IMR-90 (cell line): ENCODE measurements at regions of chr3 and their contacts with region 1.

Region 1: DNA sequence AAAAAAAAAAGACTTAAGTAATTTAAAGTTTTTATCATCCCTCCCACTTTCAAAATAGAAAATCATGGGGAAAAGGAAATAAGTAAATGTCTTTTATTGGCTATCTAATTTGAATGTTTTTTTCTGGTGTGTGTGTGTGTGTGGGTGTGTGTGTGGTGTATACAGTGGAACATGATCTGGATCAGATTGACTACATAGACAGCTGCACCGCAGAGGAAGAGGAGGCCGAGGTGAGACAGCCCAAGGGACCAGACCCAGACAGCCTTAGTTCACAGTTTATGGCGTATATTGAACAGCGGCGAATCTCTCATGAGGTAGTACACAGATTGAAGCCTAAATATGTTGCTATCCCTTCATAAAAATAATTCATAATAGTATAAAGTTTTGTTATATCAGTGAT is 44.5 kb downstream of the LRCH3 start:
- DNase-seq: no peak
- ATAC-seq: no peak
- H3K4me3 ChIP-seq: no peak overlapping the region
- H3K27ac ChIP-seq: no peak overlapping the region
- H3K4me1 ChIP-seq: no peaks in the 10 kb centered on the region
- H3K27me3 ChIP-seq: no peaks in the 10 kb centered on the region
- CTCF ChIP-seq: no peak
- POLR2A ChIP-seq: no peak
- RAD21 ChIP-seq: no peak

Region 2: DNA sequence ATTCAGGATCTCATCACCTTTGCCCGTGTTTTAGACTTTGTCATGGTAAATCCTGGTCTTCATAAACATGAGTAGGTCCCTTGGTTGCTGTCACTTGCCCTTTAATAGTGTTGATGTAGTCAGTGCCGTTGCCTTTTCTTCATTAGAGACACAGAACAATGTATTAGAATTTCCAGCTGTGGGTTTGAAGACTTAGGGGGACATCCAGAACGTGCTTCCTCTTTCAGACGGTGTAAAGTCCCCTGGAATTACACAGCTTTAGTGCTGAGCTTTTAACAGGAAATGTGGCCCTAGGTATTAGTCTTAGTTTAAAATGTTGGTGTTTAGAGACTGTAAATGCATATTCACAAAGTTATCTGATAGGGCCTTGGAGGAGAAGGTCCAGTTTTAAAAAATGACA is 53.3 kb before region 1 on chr3:
- CTCF ChIA-PET with region 1: no interaction called
- POLR2A ChIA-PET with region 1: no interaction called
- dilution Hi-C with region 1: no loop called
- in situ Hi-C with region 1: no loop called
- intact Hi-C with region 1: loop called (anchors 5 kb)
- DNase-seq: no peak
- ATAC-seq: no peak
- H3K4me3 ChIP-seq: no peak overlapping the region
- H3K27ac ChIP-seq: no peak overlapping the region
- H3K4me1 ChIP-seq: peaks cover 2% of the 10 kb centered on the region; the same call in 1 of the 2 replicates
- H3K27me3 ChIP-seq: no peaks in the 10 kb centered on the region
- CTCF ChIP-seq: no peak
- POLR2A ChIP-seq: no peak
- RAD21 ChIP-seq: no peak

Region 3: GRCh38 chr3:197854596-197855343 is 19.3 kb after region 1 on chr3:
- CTCF ChIA-PET with region 1: no interaction called
- POLR2A ChIA-PET with region 1: no interaction called
- dilution Hi-C with region 1: no loop called
- in situ Hi-C with region 1: no loop called
- intact Hi-C with region 1: no loop called
- DNase-seq: peak; percentile 99
- ATAC-seq: peak; percentile 99
- H3K4me3 ChIP-seq: no peak overlapping the region
- H3K27ac ChIP-seq: peak overlapping the region; percentile 98
- H3K4me1 ChIP-seq: peaks cover 2% of the 10 kb centered on the region; the same call in 1 of the 2 replicates
- H3K27me3 ChIP-seq: no peaks in the 10 kb centered on the region
- CTCF ChIP-seq: no peak
- POLR2A ChIP-seq: no peak
- RAD21 ChIP-seq: no peak

Region 4: GRCh38 chr3:197878427-197878826 is 42.9 kb after region 1 on chr3:
- CTCF ChIA-PET with region 1: no interaction called
- POLR2A ChIA-PET with region 1: no interaction called
- dilution Hi-C with region 1: no loop called
- in situ Hi-C with region 1: no loop called
- intact Hi-C with region 1: no loop called
- DNase-seq: no peak
- ATAC-seq: no peak
- H3K4me3 ChIP-seq: no peak overlapping the region
- H3K27ac ChIP-seq: no peak overlapping the region
- H3K4me1 ChIP-seq: no peaks in the 10 kb centered on the region
- H3K27me3 ChIP-seq: no peaks in the 10 kb centered on the region
- CTCF ChIP-seq: no peak
- POLR2A ChIP-seq: no peak
- RAD21 ChIP-seq: no peak

Region 5: GRCh38 chr3:198093112-198093679 is 257.7 kb after region 1 on chr3:
- CTCF ChIA-PET with region 1: no interaction called
- POLR2A ChIA-PET with region 1: no interaction called
- dilution Hi-C with region 1: no loop called
- in situ Hi-C with region 1: no loop called
- intact Hi-C with region 1: no loop called
- DNase-seq: no peak
- ATAC-seq: no peak
- H3K4me3 ChIP-seq: no peak overlapping the region
- H3K27ac ChIP-seq: no peak overlapping the region
- H3K4me1 ChIP-seq: no peaks in the 10 kb centered on the region
- H3K27me3 ChIP-seq: peaks cover 18% of the 10 kb centered on the region
- CTCF ChIP-seq: no peak
- POLR2A ChIP-seq: no peak
- RAD21 ChIP-seq: no peak